ENCODE measurements at regions of chr1 and their contacts with region 1.

Region 1: GRCh38 chr1:179002552-179003345 is 22.9 kb upstream of the FAM20B start:
- DNase-seq: peak; percentile 72 to 88 (median 80)
- ATAC-seq: peak; percentile 92
- H3K4me3 ChIP-seq: no peak overlapping the region
- H3K27ac ChIP-seq: no peak overlapping the region; the same call in 2 of the 3 replicates
- H3K4me1 ChIP-seq: peaks cover 6 to 11% of the 10 kb centered on the region in 2 experiments; a peak in 4 of 5 replicates
- H3K27me3 ChIP-seq: no peaks in the 10 kb centered on the region
- CTCF ChIP-seq: peak; percentile 95 to 99 (median 97)
- EP300 ChIP-seq: no peak
- POLR2A ChIP-seq: no peak
- RAD21 ChIP-seq: peak; percentile 96 to 98

Region 2: GRCh38 chr1:178310685-178311105 is 692.1 kb before region 1 on chr1:
- CTCF ChIA-PET with region 1: no interaction called
- POLR2A ChIA-PET with region 1: no interaction called
- in situ Hi-C with region 1: no loop called
- intact Hi-C with region 1: loop called (anchors 10 kb)
- DNase-seq: peak; percentile 52 to 58 (median 54)
- ATAC-seq: peak; percentile 85
- H3K4me3 ChIP-seq: no peak overlapping the region
- H3K27ac ChIP-seq: no peak overlapping the region
- H3K4me1 ChIP-seq: no peaks in the 10 kb centered on the region
- H3K27me3 ChIP-seq: no peaks in the 10 kb centered on the region
- CTCF ChIP-seq: peak; percentile 45 to 82 (median 70); a peak in 5 of 6 replicates
- EP300 ChIP-seq: no peak
- POLR2A ChIP-seq: no peak
- RAD21 ChIP-seq: peak; percentile 72 to 76

Region 3: DNA sequence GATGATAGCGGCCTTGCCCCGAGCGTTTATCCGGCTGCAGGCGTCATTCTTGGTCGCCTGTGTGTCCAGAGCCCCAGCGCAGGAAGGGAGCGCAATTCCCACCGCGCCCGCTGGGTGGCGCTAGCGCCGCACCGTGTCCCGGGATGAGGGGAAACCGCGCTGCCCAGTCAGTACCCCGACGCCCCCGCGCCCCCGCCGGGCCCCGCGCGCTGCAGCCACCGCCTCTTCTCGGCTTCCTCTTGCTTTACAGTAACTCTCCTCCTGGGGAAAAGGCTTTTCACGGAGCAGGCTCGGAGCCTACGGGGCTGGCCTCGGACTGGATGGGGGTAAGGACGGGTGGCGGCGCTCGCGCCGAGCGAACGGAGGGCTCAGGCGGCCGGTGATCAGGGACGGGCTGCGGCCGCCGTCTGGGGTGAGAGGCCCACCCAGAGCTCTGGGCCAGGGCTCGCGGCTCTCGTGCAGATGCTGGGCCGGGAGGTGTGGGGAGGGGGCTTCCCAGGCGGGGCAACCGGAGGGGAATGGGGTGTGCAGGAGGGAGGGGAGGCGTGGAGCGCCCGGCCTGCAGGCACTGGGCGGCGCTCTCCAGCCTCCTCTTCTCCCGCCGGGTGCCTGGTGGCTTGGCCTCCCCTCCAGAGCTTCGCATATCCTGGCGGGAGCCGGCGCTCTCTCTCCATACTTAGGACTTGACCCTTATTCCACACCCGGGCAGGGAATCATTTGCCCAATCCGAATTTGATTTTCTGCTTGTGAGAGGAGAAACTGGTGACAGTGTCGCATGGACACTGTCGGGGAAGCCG is 460.0 kb before region 1 on chr1:
- CTCF ChIA-PET with region 1: interaction called, 5 read pairs
- POLR2A ChIA-PET with region 1: no interaction called
- in situ Hi-C with region 1: loop called (anchors 10 kb)
- intact Hi-C with region 1: loop called (anchors 2 kb)
- DNase-seq: peak; percentile 85 to 94 (median 91)
- ATAC-seq: peak; percentile 96
- H3K4me3 ChIP-seq: peak overlapping the region; percentile 51
- H3K27ac ChIP-seq: no peak overlapping the region
- H3K4me1 ChIP-seq: peaks cover 0 to 16% of the 10 kb centered on the region in 2 experiments; a peak in 4 of 5 replicates
- H3K27me3 ChIP-seq: peaks cover 20 to 44% of the 10 kb centered on the region in 2 experiments
- CTCF ChIP-seq: peak; percentile 91 to 94 (median 93)
- EP300 ChIP-seq: no peak
- POLR2A ChIP-seq: no peak
- RAD21 ChIP-seq: peak; percentile 83 to 86

Region 4: GRCh38 chr1:178607718-178608408 is 394.9 kb before region 1 on chr1:
- CTCF ChIA-PET with region 1: no interaction called
- POLR2A ChIA-PET with region 1: no interaction called
- in situ Hi-C with region 1: no loop called
- intact Hi-C with region 1: no loop called
- DNase-seq: no peak
- ATAC-seq: no peak
- H3K4me3 ChIP-seq: no peak overlapping the region
- H3K27ac ChIP-seq: no peak overlapping the region
- H3K4me1 ChIP-seq: no peaks in the 10 kb centered on the region
- H3K27me3 ChIP-seq: peaks cover 4 to 24% of the 10 kb centered on the region in 2 experiments
- CTCF ChIP-seq: no peak
- EP300 ChIP-seq: no peak
- POLR2A ChIP-seq: no peak
- RAD21 ChIP-seq: no peak

Region 5: DNA sequence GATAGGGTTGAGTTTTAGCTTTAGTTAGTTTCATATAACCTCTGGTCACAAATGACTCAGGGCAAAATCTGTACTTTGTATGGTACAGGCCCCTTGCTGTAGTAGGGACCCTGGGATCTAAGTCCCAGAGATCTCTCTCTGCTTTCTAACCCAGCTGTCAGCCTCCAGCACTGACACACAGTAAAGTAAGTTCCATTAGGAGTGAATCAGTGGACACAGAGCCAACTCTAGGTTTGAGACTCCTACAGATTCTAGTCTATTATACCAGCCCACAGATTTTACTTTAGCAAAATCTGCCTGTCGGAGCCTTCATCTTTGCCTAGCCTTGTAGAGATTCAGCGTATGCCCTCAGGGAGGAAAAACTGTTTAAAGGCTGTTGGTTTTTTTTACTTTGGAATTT is 184.3 kb before region 1 on chr1:
- CTCF ChIA-PET with region 1: no interaction called
- POLR2A ChIA-PET with region 1: no interaction called
- in situ Hi-C with region 1: no loop called
- intact Hi-C with region 1: loop called (anchors 2 kb)
- DNase-seq: no peak
- ATAC-seq: peak; percentile 32; the same call in 2 of the 3 replicates
- H3K4me3 ChIP-seq: no peak overlapping the region
- H3K27ac ChIP-seq: no peak overlapping the region
- H3K4me1 ChIP-seq: no peaks in the 10 kb centered on the region
- H3K27me3 ChIP-seq: no peaks in the 10 kb centered on the region; a peak in 1 of 5 replicates
- CTCF ChIP-seq: no peak
- EP300 ChIP-seq: no peak
- POLR2A ChIP-seq: no peak
- RAD21 ChIP-seq: no peak

Region 6: DNA sequence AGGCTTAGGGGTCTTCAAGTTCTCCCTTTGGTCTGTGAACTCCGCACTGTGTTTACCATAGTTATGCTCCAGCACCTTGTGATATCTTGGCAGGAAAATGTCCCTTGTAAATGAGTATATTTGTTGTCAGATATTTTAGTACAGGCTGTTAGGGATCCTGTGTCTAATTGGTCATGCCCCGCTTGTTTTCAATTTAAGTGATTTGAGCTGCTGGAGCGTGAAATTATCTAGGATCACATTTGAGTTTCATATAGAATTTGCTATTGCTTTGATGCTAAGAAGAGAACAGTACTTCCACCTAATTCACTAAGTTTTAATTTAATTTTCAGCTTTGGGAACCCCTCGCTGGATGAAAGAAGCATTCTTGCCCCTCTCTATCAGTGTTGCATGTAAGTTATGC is 63.7 kb after region 1 on chr1:
- CTCF ChIA-PET with region 1: no interaction called
- POLR2A ChIA-PET with region 1: no interaction called
- in situ Hi-C with region 1: no loop called
- intact Hi-C with region 1: loop called (anchors 2 kb)
- DNase-seq: no peak
- ATAC-seq: no peak
- H3K4me3 ChIP-seq: no peak overlapping the region
- H3K27ac ChIP-seq: no peak overlapping the region
- H3K4me1 ChIP-seq: peaks cover 1 to 3% of the 10 kb centered on the region in 2 experiments
- H3K27me3 ChIP-seq: no peaks in the 10 kb centered on the region
- CTCF ChIP-seq: no peak
- EP300 ChIP-seq: no peak
- POLR2A ChIP-seq: no peak
- RAD21 ChIP-seq: no peak

Measured in K562 (cell line).